Activated CD4-positive, alpha-beta T cell treated with anti-CD3 and anti-CD28 coated beads, Interleukin-2, amount 10 ng/mL, durations not matched to agents 24 days and 14 days (primary cell): ENCODE measurements at regions of chr5 and their contacts with region 1.

Region 1: DNA sequence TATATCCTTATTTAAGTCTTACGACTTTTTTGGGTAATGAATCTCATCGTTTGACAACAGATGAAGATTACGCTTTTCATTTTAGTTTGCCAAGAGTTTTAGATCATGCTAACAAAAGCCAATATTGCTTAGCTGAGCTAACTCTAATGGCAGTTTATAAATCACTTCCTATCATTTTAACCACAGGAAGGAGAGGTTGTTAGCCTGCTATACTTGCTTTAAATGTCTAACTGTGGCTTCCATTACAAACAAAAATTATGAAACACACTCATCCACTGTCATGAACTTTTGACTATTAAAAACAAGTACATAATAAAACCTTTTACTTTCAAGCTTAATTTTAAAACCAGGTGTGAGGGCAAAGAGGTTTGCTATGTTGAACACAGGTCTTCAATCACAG is 53.7 kb upstream of the ANKH start:
- DNase-seq: no peak
- H3K4me3 Mint-ChIP-seq: peak overlapping the region; percentile 60
- H3K27ac Mint-ChIP-seq: peak overlapping the region; percentile 87
- H3K4me1 Mint-ChIP-seq: peaks cover 52% of the 10 kb centered on the region
- H3K27me3 Mint-ChIP-seq: no peaks in the 10 kb centered on the region

Region 2: GRCh38 chr5:14675865-14676300 is 249.4 kb before region 1 on chr5:
- intact Hi-C with region 1: loop called (anchors 5 kb)
- DNase-seq: peak; percentile 59
- H3K4me3 Mint-ChIP-seq: peak overlapping the region; percentile 73
- H3K27ac Mint-ChIP-seq: peak overlapping the region; percentile 84
- H3K4me1 Mint-ChIP-seq: peaks cover 62% of the 10 kb centered on the region
- H3K27me3 Mint-ChIP-seq: no peaks in the 10 kb centered on the region

Region 3: DNA sequence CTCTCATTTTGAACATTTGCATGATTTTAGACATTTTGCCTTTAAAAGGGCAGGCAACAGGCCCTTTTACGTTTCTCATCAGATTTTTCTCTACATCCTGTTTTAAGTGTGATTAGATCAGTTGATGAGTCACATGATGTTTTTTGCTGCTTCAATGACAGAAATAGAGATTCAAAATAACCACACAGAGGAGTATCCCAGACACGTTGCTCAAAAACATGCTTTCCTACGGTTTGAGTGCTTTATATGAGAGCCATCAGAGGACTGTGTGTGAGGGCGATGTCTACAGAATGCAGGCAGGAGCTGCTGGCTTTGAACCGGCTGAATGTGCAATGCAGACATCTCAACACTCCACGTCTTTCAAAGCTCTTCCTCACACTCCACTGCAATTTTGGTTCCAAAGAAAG is 218.7 kb before region 1 on chr5:
- intact Hi-C with region 1: loop called (anchors 5 kb)
- DNase-seq: peak; percentile 87
- H3K4me3 Mint-ChIP-seq: peak overlapping the region; percentile 82
- H3K27ac Mint-ChIP-seq: peak overlapping the region; percentile 99
- H3K4me1 Mint-ChIP-seq: peaks cover 69% of the 10 kb centered on the region
- H3K27me3 Mint-ChIP-seq: no peaks in the 10 kb centered on the region

Region 4: GRCh38 chr5:14958196-14958595 is 32.9 kb after region 1 on chr5:
- intact Hi-C with region 1: no loop called
- DNase-seq: no peak
- H3K4me3 Mint-ChIP-seq: no peak overlapping the region
- H3K27ac Mint-ChIP-seq: no peak overlapping the region
- H3K4me1 Mint-ChIP-seq: no peaks in the 10 kb centered on the region
- H3K27me3 Mint-ChIP-seq: peaks cover 6% of the 10 kb centered on the region